Activated T-helper 1 cell treated with anti-CD3 and anti-CD28 coated beads, Interleukin-12 subunit alpha, Interleukin-12 subunit beta, Interleukin-2, Interleukin-4 antibody, amounts not matched to agents 30 ng/mL and 10 ng/mL and 1 ng/mL, durations not matched to agents 14 hours and 24 hours and 36 hours (primary cell): ENCODE measurements at regions of chr19 and their contacts with region 1.

Region 1: GRCh38 chr19:57191141-57192076 is at the start of gene ZNF264:
- DNase-seq: peak; percentile 86
- H3K4me3 Mint-ChIP-seq: peak within 1 kb of the TSS; percentile 94
- H3K27ac Mint-ChIP-seq: peak within 1 kb of the TSS; percentile 85
- H3K4me1 Mint-ChIP-seq: peaks cover 24% of the 10 kb centered on the region
- H3K27me3 Mint-ChIP-seq: no peaks in the 10 kb centered on the region
- total RNA-seq, gene ZNF264: 16.1 and 18.3 TPM in 2 replicates

Region 2: GRCh38 chr19:57171551-57172081 is 19.8 kb before region 1 on chr19:
- intact Hi-C with region 1: loop called (anchors 1 kb)
- DNase-seq: no peak
- H3K4me3 Mint-ChIP-seq: peak overlapping the region; percentile 50
- H3K27ac Mint-ChIP-seq: no peak overlapping the region
- H3K4me1 Mint-ChIP-seq: peaks cover 5% of the 10 kb centered on the region
- H3K27me3 Mint-ChIP-seq: no peaks in the 10 kb centered on the region

Region 3: DNA sequence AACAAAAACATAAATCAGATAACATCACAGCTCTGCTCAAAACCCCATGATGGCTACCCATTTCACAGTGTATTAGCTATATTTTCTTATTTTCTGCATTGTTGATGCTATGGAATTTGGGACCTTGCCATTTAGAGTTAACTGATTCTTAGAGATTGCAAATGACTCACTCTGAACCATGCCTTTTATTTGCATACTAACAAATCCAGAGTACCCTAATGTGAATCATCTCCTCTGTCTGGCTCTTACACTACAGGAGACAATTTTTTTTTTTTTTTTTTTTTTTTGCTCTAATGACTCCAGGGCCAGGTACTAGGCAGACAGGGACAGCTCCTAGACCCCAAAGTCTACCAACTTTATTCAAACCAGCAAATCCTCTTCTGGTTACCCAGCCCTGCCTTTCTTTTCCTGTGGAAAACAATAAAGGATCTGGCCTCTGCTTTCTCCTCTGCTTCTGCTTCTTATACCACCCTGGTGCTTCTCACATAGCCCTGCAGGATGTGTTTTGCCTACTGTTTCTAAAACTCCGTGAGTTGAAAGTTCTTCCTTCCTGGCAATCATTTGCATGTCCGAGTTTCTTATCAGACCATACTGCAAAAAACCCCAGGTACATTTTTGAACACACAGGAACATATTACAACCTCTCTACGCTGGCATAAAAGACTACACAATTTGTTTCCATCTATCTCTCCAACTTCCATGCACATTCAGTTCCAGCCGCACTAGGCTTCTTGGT is 78.3 kb after region 1 on chr19:
- intact Hi-C with region 1: no loop called
- DNase-seq: no peak
- H3K4me3 Mint-ChIP-seq: no peak overlapping the region
- H3K27ac Mint-ChIP-seq: no peak overlapping the region
- H3K4me1 Mint-ChIP-seq: no peaks in the 10 kb centered on the region
- H3K27me3 Mint-ChIP-seq: no peaks in the 10 kb centered on the region